HEK293T (cell line): ENCODE measurements at regions of chr1 and their contacts with region 1.

Region 1: GRCh38 chr1:89974701-89975470 is 20.0 kb upstream of the ZNF326 start:
- DNase-seq: no peak

Region 2: DNA sequence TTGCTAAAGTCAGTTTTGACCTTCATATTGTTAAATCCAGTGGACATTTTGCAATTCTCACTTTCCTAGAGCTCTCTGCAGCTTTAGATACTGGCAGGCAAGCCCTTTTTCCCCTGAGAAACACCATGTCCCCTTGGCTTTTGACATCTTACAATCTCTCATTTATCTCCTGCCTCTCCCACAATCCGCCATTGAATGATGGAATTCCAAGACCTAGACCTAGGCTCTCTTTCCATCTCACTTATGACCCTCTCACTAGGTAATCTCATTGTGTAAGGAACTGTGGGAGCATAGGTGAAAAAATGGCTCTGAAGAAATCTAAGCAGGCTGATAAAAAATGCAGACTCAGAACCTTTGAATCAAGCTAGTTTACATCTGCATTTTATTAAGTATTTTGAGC is 984.5 kb before region 1 on chr1:
- CTCF ChIA-PET with region 1: interaction called, 11 read pairs
- POLR2A ChIA-PET with region 1: no interaction called
- DNase-seq: no peak

Region 3: GRCh38 chr1:89951766-89952604 is 22.9 kb before region 1 on chr1:
- CTCF ChIA-PET with region 1: no interaction called
- POLR2A ChIA-PET with region 1: no interaction called
- DNase-seq: no peak

Region 4: DNA sequence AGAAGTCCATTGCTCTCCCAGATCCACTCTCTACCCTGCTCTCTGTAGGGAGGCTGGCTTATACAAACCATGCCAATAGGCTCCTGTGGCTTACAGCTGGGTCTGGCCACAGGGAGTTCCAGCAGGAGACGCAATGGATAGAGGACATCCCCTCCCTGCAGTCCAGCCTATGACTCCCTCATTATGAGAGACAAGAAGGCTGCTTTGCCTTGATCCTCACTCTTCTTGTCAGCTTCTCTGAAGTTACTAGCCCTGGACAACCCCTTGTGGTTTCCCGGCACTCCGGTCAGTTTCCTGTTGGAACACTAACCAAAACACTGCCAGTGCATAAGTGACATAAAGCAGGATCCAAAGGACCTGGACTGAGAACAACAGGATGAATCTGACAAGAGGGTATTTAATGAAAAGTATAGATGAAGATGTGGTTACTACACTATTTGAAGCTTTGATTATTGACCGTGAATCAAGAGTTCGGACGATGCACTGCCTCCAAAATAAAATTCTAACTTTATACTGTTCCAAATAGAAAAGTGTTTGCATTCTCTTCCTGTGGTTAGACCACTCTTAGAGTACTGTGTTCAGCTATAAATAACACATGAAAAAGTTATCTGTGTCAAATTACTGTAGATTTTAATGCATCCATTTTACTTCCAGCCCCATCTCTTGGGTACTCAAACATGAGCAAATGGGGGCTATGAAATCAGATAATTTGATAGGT is 12.7 kb before region 1 on chr1:
- CTCF ChIA-PET with region 1: no interaction called
- POLR2A ChIA-PET with region 1: no interaction called
- DNase-seq: no peak